Natural killer cell (primary cell): ENCODE measurements at regions of chr9 and their contacts with region 1.

Region 1: DNA sequence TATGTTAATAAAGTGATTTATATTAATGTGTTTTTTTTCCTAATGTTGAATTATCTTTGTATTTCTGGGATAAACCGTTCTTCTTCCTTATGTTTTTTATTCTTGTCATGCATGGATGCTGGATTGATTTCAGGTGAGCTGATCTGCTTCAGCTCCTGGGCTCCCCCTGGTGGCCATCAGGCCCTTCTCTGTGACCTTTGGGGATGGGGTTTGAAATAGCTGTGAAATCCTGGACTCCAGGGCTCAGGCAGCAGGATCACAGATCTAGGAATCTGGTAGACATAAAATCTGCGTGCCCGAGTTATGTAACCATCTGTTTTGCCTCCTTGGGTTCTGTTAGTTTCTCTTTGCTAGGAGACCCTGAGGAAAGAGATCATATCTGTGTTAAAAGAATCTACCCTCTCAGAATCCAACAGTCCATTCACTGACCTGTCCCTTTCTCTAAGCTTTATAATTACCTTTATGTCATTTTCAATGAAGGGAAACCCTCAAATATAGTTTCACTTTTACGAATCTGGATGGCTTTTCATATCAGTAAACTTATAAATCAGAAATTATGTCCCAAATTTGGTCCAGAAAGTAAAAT is 12.2 kb upstream of the OR13J1 start:
- DNase-seq: peak; percentile 78 to 89
- ATAC-seq: peak; percentile 64 to 75 (median 67)
- H3K4me3 ChIP-seq: no peak overlapping the region
- H3K4me3 Mint-ChIP-seq: no peak overlapping the region
- H3K27ac ChIP-seq: no peak overlapping the region
- H3K27ac Mint-ChIP-seq: no peak overlapping the region
- H3K4me1 ChIP-seq: no peaks in the 10 kb centered on the region
- H3K4me1 Mint-ChIP-seq: no peaks in the 10 kb centered on the region
- H3K27me3 ChIP-seq: peaks cover 2% of the 10 kb centered on the region
- H3K27me3 Mint-ChIP-seq: peaks cover 18 to 21% of the 10 kb centered on the region in 2 donors
- CTCF ChIP-seq: peak; percentile 99

Region 2: GRCh38 chr9:35790385-35791296 is 91.7 kb before region 1 on chr9:
- intact Hi-C with region 1: loop called (anchors 1 kb)
- DNase-seq: peak; percentile 39 to 84
- ATAC-seq: peak; percentile 80 to 97 (median 95)
- H3K4me3 ChIP-seq: no peak overlapping the region
- H3K4me3 Mint-ChIP-seq: peak overlapping the region; percentile 53
- H3K27ac ChIP-seq: no peak overlapping the region
- H3K27ac Mint-ChIP-seq: peak overlapping the region in 1 of 2 donors; percentile 33
- H3K4me1 ChIP-seq: no peaks in the 10 kb centered on the region
- H3K4me1 Mint-ChIP-seq: peaks cover 0 to 18% of the 10 kb centered on the region in 2 donors
- H3K27me3 ChIP-seq: no peaks in the 10 kb centered on the region
- H3K27me3 Mint-ChIP-seq: peaks cover 0 to 9% of the 10 kb centered on the region in 2 donors
- CTCF ChIP-seq: peak; percentile 85

Region 3: GRCh38 chr9:35859310-35859989 is 22.9 kb before region 1 on chr9:
- intact Hi-C with region 1: no loop called
- DNase-seq: peak; percentile 13 to 34
- ATAC-seq: peak in 2 of 3 donors; percentile 61 to 67
- H3K4me3 ChIP-seq: no peak overlapping the region
- H3K4me3 Mint-ChIP-seq: no peak overlapping the region
- H3K27ac ChIP-seq: no peak overlapping the region
- H3K27ac Mint-ChIP-seq: no peak overlapping the region
- H3K4me1 ChIP-seq: no peaks in the 10 kb centered on the region
- H3K4me1 Mint-ChIP-seq: peaks cover 7 to 14% of the 10 kb centered on the region in 2 donors
- H3K27me3 ChIP-seq: peaks cover 2% of the 10 kb centered on the region
- H3K27me3 Mint-ChIP-seq: peaks cover 19 to 23% of the 10 kb centered on the region in 2 donors
- CTCF ChIP-seq: no peak